ENCODE measurements at regions of chr12 and their contacts with region 1.

Region 1: GRCh38 chr12:91382081-91382543 is 199.5 kb upstream of the DCN start:
- DNase-seq: peak; percentile 87
- ATAC-seq: peak; percentile 85 to 88

Region 2: DNA sequence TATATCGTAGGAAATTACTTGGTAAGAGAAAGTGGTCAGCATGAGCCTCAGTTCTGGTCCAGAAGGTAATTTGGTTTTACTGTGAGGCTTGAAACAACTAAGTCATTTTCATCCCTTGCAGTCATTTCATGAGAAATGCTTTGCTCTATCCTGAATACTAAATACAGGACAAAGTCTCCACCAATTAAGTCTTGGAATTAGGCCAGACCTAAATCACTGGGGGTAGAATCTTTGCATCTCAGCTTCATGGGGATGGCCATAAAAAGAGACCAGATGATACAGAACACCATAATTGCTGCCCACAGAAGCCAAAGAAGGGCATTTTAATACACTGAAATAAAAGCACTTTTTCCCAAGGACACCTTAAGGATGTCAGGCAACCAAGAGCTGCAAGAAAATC is 78.4 kb after region 1 on chr12:
- intact Hi-C with region 1: no loop called
- DNase-seq: no peak
- ATAC-seq: no peak

Region 3: DNA sequence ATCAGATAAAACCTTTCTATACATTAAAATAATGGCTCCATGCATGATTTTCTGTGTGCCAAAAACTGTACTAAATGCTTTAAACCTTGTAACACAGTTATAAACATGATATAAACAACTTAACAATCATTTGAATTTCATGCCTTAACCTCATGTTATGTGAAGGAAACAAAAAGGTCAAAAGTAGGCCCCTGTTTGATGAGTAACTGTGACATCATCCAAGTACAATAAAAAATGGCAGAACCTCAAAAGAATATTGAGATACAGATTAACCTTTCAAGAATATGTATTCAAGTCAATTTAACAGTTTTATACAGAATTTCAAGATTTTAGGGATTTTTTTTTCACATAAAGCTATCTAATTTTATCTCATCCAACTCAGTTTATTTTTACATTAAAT is 111.2 kb after region 1 on chr12:
- intact Hi-C with region 1: no loop called
- DNase-seq: no peak
- ATAC-seq: no peak

Region 4: GRCh38 chr12:92608151-92609091 is 1226.3 kb after region 1 on chr12:
- intact Hi-C with region 1: loop called in 1 of 2 experiments (anchors 10 kb)
- DNase-seq: no peak
- ATAC-seq: peak in 1 of 2 donors; percentile 57

Region 5: DNA sequence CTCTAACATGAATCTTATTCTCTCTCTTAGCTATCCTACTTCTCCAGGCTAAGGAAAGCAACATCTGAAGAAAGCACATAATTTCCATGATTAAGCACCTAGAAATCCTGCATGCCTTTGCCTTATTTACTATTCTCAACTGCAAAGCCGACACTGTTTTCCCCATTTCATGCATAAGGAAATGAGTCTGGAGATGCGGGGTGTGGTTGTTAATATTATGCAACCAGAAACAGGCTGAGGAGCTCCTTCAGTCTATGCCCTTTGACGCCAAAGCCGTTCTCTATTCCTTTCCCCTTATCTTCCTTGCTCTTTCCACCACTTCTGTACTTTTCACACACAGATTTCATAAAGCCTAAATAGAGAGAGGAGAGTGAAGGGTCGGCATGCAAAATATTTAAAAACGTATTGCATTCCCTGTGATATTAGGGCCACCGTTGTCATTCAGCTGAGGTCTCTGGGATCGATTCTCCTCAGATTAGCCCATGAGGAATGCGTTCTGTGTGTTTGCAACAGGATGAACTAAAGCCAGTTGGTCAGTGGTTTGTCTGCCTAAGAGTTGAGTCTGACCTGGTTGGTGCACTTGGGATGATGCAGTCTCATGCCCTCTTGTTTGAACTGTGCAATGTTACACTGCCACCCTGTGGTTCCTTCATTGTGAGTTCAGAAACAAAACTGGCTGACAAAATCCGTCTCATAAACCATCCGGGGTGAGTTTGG is 1267.6 kb after region 1 on chr12:
- intact Hi-C with region 1: loop called in 1 of 2 experiments (anchors 5 kb)
- DNase-seq: peak; percentile 35
- ATAC-seq: peak; percentile 92 to 94

Measured in left cardiac atrium (tissue), 4 donors.